ENCODE measurements at regions of chr9 and their contacts with region 1.

Region 1: GRCh38 chr9:7055201-7055903 is 297.6 kb downstream of the KDM4C start:
- DNase-seq: no peak
- H3K4me3 ChIP-seq: no peak overlapping the region
- H3K27ac ChIP-seq: no peak overlapping the region
- H3K4me1 ChIP-seq: peaks cover 7% of the 10 kb centered on the region in 2 experiments; a peak in 2 of 4 replicates
- H3K27me3 ChIP-seq: no peaks in the 10 kb centered on the region
- CTCF ChIP-seq: no peak
- EP300 ChIP-seq: no peak
- RAD21 ChIP-seq: no peak

Region 2: GRCh38 chr9:6907772-6908381 is 147.5 kb before region 1 on chr9:
- CTCF ChIA-PET with region 1: interaction called, 23 read pairs
- POLR2A ChIA-PET with region 1: no interaction called
- DNase-seq: no peak
- H3K4me3 ChIP-seq: no peak overlapping the region; a peak in 1 of 4 replicates
- H3K27ac ChIP-seq: no peak overlapping the region
- H3K4me1 ChIP-seq: peaks cover under 1 to 15% of the 10 kb centered on the region in 2 experiments; a peak in 2 of 4 replicates
- H3K27me3 ChIP-seq: no peaks in the 10 kb centered on the region
- CTCF ChIP-seq: peak; percentile 91
- EP300 ChIP-seq: no peak
- RAD21 ChIP-seq: peak; percentile 88

Region 3: GRCh38 chr9:7033076-7034045 is 22.0 kb before region 1 on chr9:
- CTCF ChIA-PET with region 1: interaction called, 20 read pairs
- POLR2A ChIA-PET with region 1: no interaction called
- DNase-seq: no peak
- H3K4me3 ChIP-seq: no peak overlapping the region
- H3K27ac ChIP-seq: no peak overlapping the region
- H3K4me1 ChIP-seq: no peaks in the 10 kb centered on the region; a peak in 1 of 4 replicates
- H3K27me3 ChIP-seq: no peaks in the 10 kb centered on the region
- CTCF ChIP-seq: no peak
- EP300 ChIP-seq: no peak
- RAD21 ChIP-seq: no peak

Region 4: DNA sequence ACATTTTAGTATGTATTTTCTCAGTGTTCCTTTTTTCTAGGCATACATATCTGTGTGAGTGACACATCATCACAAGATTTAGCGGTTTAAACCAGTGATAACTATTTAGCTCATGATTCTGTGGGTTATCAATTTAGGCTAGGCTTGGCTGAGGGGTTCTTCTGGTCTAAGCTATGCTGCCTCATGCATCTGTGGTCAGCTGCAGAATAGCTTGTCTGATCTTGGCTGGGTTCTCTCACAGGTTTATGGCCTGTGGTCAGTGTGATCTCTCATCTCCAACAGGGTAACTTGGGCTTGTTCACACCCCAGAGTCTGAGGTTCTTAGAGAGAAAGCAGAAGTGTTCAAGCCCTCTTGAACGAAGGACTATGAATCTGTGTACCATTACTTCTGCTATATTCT is 65.7 kb after region 1 on chr9:
- CTCF ChIA-PET with region 1: no interaction called
- POLR2A ChIA-PET with region 1: no interaction called
- DNase-seq: no peak
- H3K4me3 ChIP-seq: no peak overlapping the region
- H3K27ac ChIP-seq: no peak overlapping the region
- H3K4me1 ChIP-seq: no peaks in the 10 kb centered on the region; a peak in 1 of 4 replicates
- H3K27me3 ChIP-seq: no peaks in the 10 kb centered on the region
- CTCF ChIP-seq: no peak
- EP300 ChIP-seq: no peak
- RAD21 ChIP-seq: no peak

Region 5: GRCh38 chr9:7405924-7406604 is 350.7 kb after region 1 on chr9:
- CTCF ChIA-PET with region 1: interaction called, 24 read pairs
- POLR2A ChIA-PET with region 1: no interaction called
- DNase-seq: no peak
- H3K4me3 ChIP-seq: no peak overlapping the region
- H3K27ac ChIP-seq: no peak overlapping the region
- H3K4me1 ChIP-seq: no peaks in the 10 kb centered on the region
- H3K27me3 ChIP-seq: no peaks in the 10 kb centered on the region
- CTCF ChIP-seq: no peak
- EP300 ChIP-seq: no peak
- RAD21 ChIP-seq: no peak